Prostate gland (tissue), 2 donors: ENCODE measurements at regions of chr14 and their contacts with region 1.

Region 1: GRCh38 chr14:95993768-95994592 is 45.2 kb upstream of the C14orf132 start:
- DNase-seq: peak; percentile 37
- H3K4me3 ChIP-seq: no peak overlapping the region
- H3K27ac ChIP-seq: no peak overlapping the region
- H3K4me1 ChIP-seq: no peaks in the 10 kb centered on the region
- H3K27me3 ChIP-seq: no peaks in the 10 kb centered on the region
- CTCF ChIP-seq: peak; percentile 55 to 82 (median 80)
- POLR2A ChIP-seq: no peak

Region 2: DNA sequence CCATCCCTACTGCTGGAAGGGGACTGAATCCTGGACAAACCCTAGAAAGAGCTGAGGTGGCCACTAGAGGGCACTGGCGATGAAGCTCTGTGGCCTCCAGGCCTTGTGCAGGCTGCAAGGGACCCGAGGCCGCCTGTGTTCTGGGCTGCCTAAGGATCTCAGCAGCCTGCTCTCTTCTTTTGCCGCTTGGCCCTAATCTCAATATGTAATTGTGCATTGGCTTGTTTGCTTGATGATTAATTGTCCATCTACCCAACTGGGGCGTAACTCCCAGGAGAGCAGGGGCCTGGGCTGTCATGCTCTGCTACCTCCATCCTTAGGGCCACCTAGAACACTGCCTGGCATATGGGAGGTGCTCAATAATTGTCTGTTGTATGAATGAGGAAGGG is 551.4 kb before region 1 on chr14:
- intact Hi-C with region 1: loop called (anchors 10 kb)
- DNase-seq: peak; percentile 71
- H3K4me3 ChIP-seq: no peak overlapping the region
- H3K27ac ChIP-seq: no peak overlapping the region
- H3K4me1 ChIP-seq: peaks cover 5% of the 10 kb centered on the region
- H3K27me3 ChIP-seq: no peaks in the 10 kb centered on the region
- CTCF ChIP-seq: peak; percentile 37 to 79 (median 74)
- POLR2A ChIP-seq: no peak

Region 3: GRCh38 chr14:95561001-95561412 is 433.0 kb before region 1 on chr14:
- intact Hi-C with region 1: loop called (anchors 2 kb)
- DNase-seq: peak; percentile 90
- H3K4me3 ChIP-seq: no peak overlapping the region
- H3K27ac ChIP-seq: no peak overlapping the region
- H3K4me1 ChIP-seq: no peaks in the 10 kb centered on the region
- H3K27me3 ChIP-seq: no peaks in the 10 kb centered on the region
- CTCF ChIP-seq: peak; percentile 89 to 99 (median 98)
- POLR2A ChIP-seq: no peak

Region 4: GRCh38 chr14:96275177-96276112 is 281.5 kb after region 1 on chr14:
- intact Hi-C with region 1: loop called (anchors 5 kb)
- DNase-seq: peak; percentile 53
- H3K4me3 ChIP-seq: no peak overlapping the region
- H3K27ac ChIP-seq: no peak overlapping the region
- H3K4me1 ChIP-seq: no peaks in the 10 kb centered on the region
- H3K27me3 ChIP-seq: no peaks in the 10 kb centered on the region
- CTCF ChIP-seq: peak; percentile 80 to 92 (median 90)
- POLR2A ChIP-seq: no peak